Common myeloid progenitor, CD34-positive (primary cell): ENCODE measurements at regions of chr22 and their contacts with region 1.

Region 1: GRCh38 chr22:32897400-32897799 is 95.9 kb downstream of the TIMP3 start:
- DNase-seq: no peak
- H3K4me3 ChIP-seq: no peak overlapping the region
- H3K27ac ChIP-seq: no peak overlapping the region
- H3K4me1 ChIP-seq: peaks cover 0 to 8% (median 1%) of the 10 kb centered on the region in 4 experiments
- H3K27me3 ChIP-seq: no peaks in the 10 kb centered on the region

Region 2: GRCh38 chr22:32880893-32881596 is 16.4 kb before region 1 on chr22:
- CTCF ChIA-PET with region 1: interaction called, 12 read pairs
- POLR2A ChIA-PET with region 1: interaction called, 6 read pairs
- DNase-seq: peak; percentile 99 to 100 (median 100)
- H3K4me3 ChIP-seq: peak overlapping the region in 1 of 7 experiments; percentile 33
- H3K27ac ChIP-seq: peak overlapping the region; percentile 18 to 72
- H3K4me1 ChIP-seq: peaks cover 22 to 46% (median 34%) of the 10 kb centered on the region in 4 experiments
- H3K27me3 ChIP-seq: no peaks in the 10 kb centered on the region